GM12878 (cell line): ENCODE measurements at regions of chr15 and their contacts with region 1.

Region 1: GRCh38 chr15:63188926-63189871 is at the start of gene RAB8B:
- DNase-seq: peak; percentile 67
- ATAC-seq: peak; percentile 83
- H3K4me3 ChIP-seq: peak within 1 kb of the TSS; percentile 96
- H3K27ac ChIP-seq: peak within 1 kb of the TSS; percentile 86
- H3K4me1 ChIP-seq: peaks cover 20% of the 10 kb centered on the region
- H3K27me3 ChIP-seq: no peaks in the 10 kb centered on the region
- CTCF ChIP-seq: 0 out of 6 replicates have a peak, but pooled peaks of 1 of the 3 experiments have one; percentile 4
- EP300 ChIP-seq: 0 out of 4 replicates have a peak, but pooled peaks of 1 of the 2 experiments have one; percentile 10
- POLR2A ChIP-seq: peak; percentile 89
- RAD21 ChIP-seq: no peak
- polyA plus RNA-seq, gene RAB8B: 17.8 to 26.0 TPM

Region 2: DNA sequence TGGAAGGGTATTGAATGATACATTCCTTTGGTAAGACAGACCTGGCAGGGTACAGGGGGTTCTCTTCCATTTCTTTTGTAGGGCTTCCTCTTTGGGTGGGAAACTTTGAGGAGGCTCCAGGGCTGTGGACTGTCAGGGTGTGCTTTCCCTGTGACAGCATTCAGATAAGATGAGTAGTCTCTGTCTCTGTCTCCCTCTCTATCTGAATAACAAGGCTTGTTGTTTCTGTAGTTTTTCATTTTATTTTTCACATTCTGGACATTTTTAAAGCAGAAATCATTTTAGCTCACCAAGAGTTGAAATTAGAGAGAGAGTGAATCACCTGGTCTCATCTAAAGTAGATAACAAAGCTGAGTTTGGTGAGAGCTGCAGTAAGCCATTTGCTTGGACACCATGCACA is 247.5 kb before region 1 on chr15:
- CTCF ChIA-PET with region 1: no interaction called
- POLR2A ChIA-PET with region 1: no interaction called
- RAD21 ChIA-PET with region 1: no interaction called
- SMC1A ChIA-PET with region 1: no interaction called
- in situ Hi-C with region 1: no loop called
- intact Hi-C with region 1: no loop called
- DNase-seq: no peak
- ATAC-seq: no peak
- H3K4me3 ChIP-seq: no peak overlapping the region
- H3K27ac ChIP-seq: no peak overlapping the region
- H3K4me1 ChIP-seq: no peaks in the 10 kb centered on the region
- H3K27me3 ChIP-seq: peaks cover 0 to 1% of the 10 kb centered on the region in 2 experiments; a peak in 2 of 4 replicates
- CTCF ChIP-seq: no peak
- EP300 ChIP-seq: no peak
- POLR2A ChIP-seq: no peak
- RAD21 ChIP-seq: no peak

Region 3: DNA sequence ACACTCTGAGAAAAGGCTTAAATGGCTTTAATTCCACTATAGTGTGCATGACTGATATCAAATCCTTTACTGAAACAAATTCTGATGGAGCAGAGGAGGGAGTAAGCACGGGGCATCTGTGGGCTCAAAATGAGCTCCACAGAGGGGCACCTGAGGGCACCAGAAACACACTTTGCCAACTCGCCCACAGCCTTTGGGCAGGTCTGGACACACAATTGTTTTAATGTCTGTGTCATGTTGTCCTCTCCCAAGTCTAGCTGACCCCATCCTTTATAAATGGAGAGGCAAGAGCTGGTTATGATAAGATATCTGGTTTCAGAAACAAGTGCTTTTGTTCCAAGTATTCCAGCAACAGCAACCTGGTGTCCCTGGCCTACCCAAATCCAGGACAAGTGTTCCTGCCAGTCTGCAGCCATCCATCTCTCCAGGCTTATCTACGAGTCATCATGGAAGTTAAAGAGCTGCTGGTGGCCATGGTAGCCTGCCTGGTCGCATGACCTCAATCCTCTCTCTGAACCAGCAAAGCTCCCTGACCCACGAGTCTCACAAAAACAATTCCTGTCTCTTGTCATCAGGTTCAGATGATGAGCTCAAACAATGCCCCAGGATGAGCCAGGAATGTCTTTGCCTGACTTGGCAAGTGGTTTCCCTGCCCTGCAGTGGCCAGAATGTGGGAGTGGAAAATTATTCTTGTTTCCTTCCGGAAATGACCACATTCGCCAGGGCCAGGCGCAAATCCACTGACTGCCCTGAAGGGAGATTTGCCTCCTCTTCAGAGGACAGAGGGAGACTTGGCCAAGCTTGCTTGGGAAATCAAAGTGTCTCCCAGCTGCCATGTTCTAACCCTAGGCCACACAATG is 211.0 kb before region 1 on chr15:
- CTCF ChIA-PET with region 1: no interaction called
- POLR2A ChIA-PET with region 1: no interaction called
- RAD21 ChIA-PET with region 1: no interaction called
- SMC1A ChIA-PET with region 1: no interaction called
- in situ Hi-C with region 1: no loop called
- intact Hi-C with region 1: no loop called
- DNase-seq: no peak
- ATAC-seq: no peak
- H3K4me3 ChIP-seq: no peak overlapping the region
- H3K27ac ChIP-seq: no peak overlapping the region
- H3K4me1 ChIP-seq: no peaks in the 10 kb centered on the region
- H3K27me3 ChIP-seq: no peaks in the 10 kb centered on the region
- CTCF ChIP-seq: no peak
- EP300 ChIP-seq: no peak
- POLR2A ChIP-seq: no peak
- RAD21 ChIP-seq: no peak

Region 4: DNA sequence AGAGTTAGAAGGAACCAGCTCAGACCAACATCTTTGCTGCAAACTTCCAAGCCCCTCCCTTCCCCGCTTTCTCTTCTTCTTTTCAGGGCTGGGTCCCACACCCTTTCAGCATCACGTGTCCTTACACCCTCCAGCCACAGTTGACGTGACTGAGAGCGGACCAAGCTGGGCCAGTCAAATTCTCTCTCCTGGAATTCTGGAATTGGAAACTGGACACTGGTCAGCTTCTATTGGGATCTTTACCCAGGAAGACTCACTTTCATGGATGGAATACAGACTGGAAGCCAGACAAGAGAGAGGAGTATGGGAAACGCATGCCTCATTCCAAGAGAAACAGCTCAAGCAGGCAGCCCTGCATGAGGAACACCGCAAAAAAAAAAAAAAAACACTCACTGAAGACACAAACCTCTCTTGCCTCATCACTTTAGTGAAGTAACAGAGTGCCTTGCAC is 159.1 kb before region 1 on chr15:
- CTCF ChIA-PET with region 1: no interaction called
- POLR2A ChIA-PET with region 1: no interaction called
- RAD21 ChIA-PET with region 1: no interaction called
- SMC1A ChIA-PET with region 1: no interaction called
- in situ Hi-C with region 1: no loop called
- intact Hi-C with region 1: no loop called
- DNase-seq: no peak
- ATAC-seq: no peak
- H3K4me3 ChIP-seq: no peak overlapping the region
- H3K27ac ChIP-seq: no peak overlapping the region
- H3K4me1 ChIP-seq: no peaks in the 10 kb centered on the region
- H3K27me3 ChIP-seq: peaks cover 0 to 4% of the 10 kb centered on the region in 2 experiments; a peak in 1 of 4 replicates
- CTCF ChIP-seq: no peak
- EP300 ChIP-seq: no peak
- POLR2A ChIP-seq: no peak
- RAD21 ChIP-seq: no peak

Region 5: DNA sequence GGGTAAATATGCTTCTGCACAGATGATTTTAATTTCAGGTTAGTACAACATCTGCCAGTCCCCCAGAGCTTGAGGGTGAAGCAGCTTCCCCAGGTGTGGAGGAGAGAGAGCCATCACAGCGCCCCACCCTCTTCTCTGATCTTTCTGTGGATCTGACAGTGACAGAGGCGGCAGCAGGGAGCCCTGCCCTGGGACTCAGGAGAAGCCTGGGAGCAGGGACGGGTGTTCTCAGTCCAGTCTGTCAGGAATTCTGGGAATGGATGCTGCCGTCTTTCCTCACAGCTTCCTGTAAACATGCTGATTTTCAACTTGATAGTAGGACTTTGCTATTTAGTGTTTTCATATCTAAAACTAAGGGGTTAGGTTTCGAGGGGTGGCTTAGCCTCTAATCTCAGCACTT is 11.2 kb before region 1 on chr15:
- CTCF ChIA-PET with region 1: interaction called, 5 read pairs
- POLR2A ChIA-PET with region 1: interaction called, 4 read pairs
- RAD21 ChIA-PET with region 1: interaction called, 13 read pairs
- SMC1A ChIA-PET with region 1: interaction called, 13 read pairs
- in situ Hi-C with region 1: no loop called
- intact Hi-C with region 1: no loop called
- DNase-seq: no peak
- ATAC-seq: no peak
- H3K4me3 ChIP-seq: no peak overlapping the region
- H3K27ac ChIP-seq: no peak overlapping the region
- H3K4me1 ChIP-seq: peaks cover 6% of the 10 kb centered on the region
- H3K27me3 ChIP-seq: no peaks in the 10 kb centered on the region
- CTCF ChIP-seq: no peak
- EP300 ChIP-seq: no peak
- POLR2A ChIP-seq: no peak
- RAD21 ChIP-seq: no peak

Region 6: GRCh38 chr15:63212050-63213004 is 23.1 kb after region 1 on chr15:
- CTCF ChIA-PET with region 1: interaction called, 90 read pairs
- POLR2A ChIA-PET with region 1: interaction called, 118 read pairs
- RAD21 ChIA-PET with region 1: interaction called, 28 read pairs
- SMC1A ChIA-PET with region 1: interaction called, 252 read pairs
- in situ Hi-C with region 1: no loop called
- intact Hi-C with region 1: loop called (anchors 2 kb)
- DNase-seq: peak; percentile 59
- ATAC-seq: peak; percentile 70
- H3K4me3 ChIP-seq: peak overlapping the region; percentile 62
- H3K27ac ChIP-seq: peak overlapping the region; percentile 87
- H3K4me1 ChIP-seq: peaks cover 46% of the 10 kb centered on the region
- H3K27me3 ChIP-seq: no peaks in the 10 kb centered on the region
- CTCF ChIP-seq: no peak
- EP300 ChIP-seq: peak; percentile 75 to 87
- POLR2A ChIP-seq: no peak
- RAD21 ChIP-seq: no peak

Region 7: GRCh38 chr15:63256433-63257274 is 67.5 kb after region 1 on chr15:
- CTCF ChIA-PET with region 1: interaction called, 3 read pairs
- POLR2A ChIA-PET with region 1: no interaction called
- RAD21 ChIA-PET with region 1: no interaction called
- SMC1A ChIA-PET with region 1: interaction called, 4 read pairs
- in situ Hi-C with region 1: no loop called
- intact Hi-C with region 1: loop called (anchors 2 kb)
- DNase-seq: no peak
- ATAC-seq: no peak
- H3K4me3 ChIP-seq: no peak overlapping the region
- H3K27ac ChIP-seq: no peak overlapping the region
- H3K4me1 ChIP-seq: no peaks in the 10 kb centered on the region
- H3K27me3 ChIP-seq: no peaks in the 10 kb centered on the region
- CTCF ChIP-seq: no peak
- EP300 ChIP-seq: no peak
- POLR2A ChIP-seq: no peak
- RAD21 ChIP-seq: no peak